Ovary (tissue), 10 donors: ENCODE measurements at regions of chr13 and their contacts with region 1.

Region 1: GRCh38 chr13:91031508-91031907 is 316.0 kb upstream of the MIR17HG start:
- DNase-seq: no peak
- H3K4me3 ChIP-seq: no peak overlapping the region
- H3K27ac ChIP-seq: no peak overlapping the region
- H3K4me1 ChIP-seq: no peaks in the 10 kb centered on the region
- H3K27me3 ChIP-seq: no peaks in the 10 kb centered on the region
- CTCF ChIP-seq: no peak
- EP300 ChIP-seq: no peak
- POLR2A ChIP-seq: no peak

Region 2: DNA sequence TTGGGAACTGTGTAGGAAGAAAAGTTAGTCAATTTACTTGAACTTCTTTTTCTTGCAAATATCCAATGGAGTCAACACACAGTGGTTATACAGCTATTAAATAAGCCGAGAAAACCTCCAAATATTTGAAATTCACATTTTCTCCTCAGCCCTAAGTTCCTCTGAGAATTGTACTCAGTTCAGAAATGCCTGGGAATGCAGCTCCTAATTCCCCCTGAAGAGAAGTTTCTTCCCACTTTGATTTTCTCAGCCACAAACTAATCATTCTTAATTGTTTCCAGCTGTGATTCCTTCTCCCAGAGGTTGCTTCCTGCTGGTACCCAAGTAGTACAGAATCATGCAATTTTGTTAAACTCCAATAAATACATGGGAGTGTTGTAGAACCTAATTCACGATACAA is 69.9 kb after region 1 on chr13:
- intact Hi-C with region 1: no loop called
- DNase-seq: no peak
- H3K4me3 ChIP-seq: no peak overlapping the region
- H3K27ac ChIP-seq: no peak overlapping the region
- H3K4me1 ChIP-seq: no peaks in the 10 kb centered on the region
- H3K27me3 ChIP-seq: peaks cover 2% of the 10 kb centered on the region
- CTCF ChIP-seq: no peak
- EP300 ChIP-seq: no peak
- POLR2A ChIP-seq: no peak

Region 3: GRCh38 chr13:91220873-91221272 is 189.4 kb after region 1 on chr13:
- intact Hi-C with region 1: no loop called
- DNase-seq: no peak
- H3K4me3 ChIP-seq: no peak overlapping the region
- H3K27ac ChIP-seq: no peak overlapping the region
- H3K4me1 ChIP-seq: no peaks in the 10 kb centered on the region
- H3K27me3 ChIP-seq: no peaks in the 10 kb centered on the region
- CTCF ChIP-seq: no peak
- EP300 ChIP-seq: no peak
- POLR2A ChIP-seq: no peak

Region 4: DNA sequence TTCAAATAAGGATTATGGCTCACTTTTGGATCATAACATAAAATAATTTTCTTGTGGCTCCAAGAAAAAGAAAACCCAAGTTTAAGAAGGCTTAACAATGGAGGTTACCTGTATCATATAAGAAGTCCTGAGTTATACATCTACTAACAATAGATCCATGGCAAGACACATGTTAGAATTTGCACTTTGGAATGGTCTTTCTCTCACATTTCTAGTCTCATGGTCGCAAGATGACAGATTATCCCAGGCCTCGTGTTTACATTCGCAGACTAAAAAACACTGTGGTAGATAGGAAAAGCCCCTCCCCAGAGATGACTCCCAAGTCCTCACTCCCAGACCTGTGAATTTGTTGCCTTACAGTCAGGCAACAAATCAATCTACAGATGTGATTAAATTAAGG is 1448.9 kb after region 1 on chr13:
- intact Hi-C with region 1: loop called in 1 of 4 experiments (anchors 5 kb)
- DNase-seq: no peak
- H3K4me3 ChIP-seq: no peak overlapping the region
- H3K27ac ChIP-seq: no peak overlapping the region
- H3K4me1 ChIP-seq: no peaks in the 10 kb centered on the region
- H3K27me3 ChIP-seq: no peaks in the 10 kb centered on the region
- CTCF ChIP-seq: no peak
- EP300 ChIP-seq: no peak
- POLR2A ChIP-seq: no peak